Heart right ventricle (tissue), 16 donors: ENCODE measurements at regions of chr20 and their contacts with region 1.

Region 1: DNA sequence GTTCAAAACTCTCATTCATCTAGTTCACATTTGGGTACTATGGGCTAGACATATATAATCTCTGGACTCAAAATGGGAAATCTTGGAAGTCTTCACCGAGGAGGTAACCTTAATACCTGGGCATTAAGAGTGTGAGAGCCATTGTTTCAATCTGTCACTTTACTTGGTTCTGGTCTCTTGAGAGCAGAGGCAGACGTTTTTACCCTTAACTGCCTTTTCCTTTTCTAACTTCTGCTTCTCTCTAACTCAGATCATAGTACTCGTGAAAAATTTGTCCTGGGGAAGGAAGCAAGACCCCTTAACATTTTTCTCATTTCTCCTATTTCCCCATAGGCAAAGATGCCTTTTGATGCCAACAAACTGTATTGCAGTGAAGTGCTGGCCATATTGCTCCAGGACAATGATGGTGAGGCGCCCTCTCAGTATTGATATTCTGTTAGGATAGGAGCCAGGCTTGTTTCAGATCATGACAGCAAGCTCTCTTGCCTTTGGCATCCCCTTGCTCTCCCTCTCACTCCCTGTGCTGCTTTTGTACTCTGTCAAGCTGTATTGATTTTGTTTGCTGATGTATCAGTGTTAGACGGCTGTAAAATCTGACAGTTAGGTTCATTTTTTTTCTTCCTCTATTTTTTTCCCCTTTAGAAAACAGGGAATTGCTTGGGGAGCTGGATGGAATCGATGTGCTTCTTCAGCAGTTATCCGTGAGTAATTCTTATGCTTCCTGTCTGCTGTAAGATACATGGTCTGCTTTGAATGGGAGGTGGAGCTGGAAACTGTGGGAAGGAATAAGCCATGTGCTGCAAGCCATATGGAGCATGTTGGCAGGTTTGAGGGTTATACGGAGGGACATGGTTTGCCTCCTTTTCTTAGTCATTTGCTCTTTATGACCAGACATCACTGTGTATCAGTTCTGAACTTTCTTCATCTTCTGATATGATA is 83.5 kb downstream of the CTNNBL1 start:
- DNase-seq: no peak
- ATAC-seq: no peak
- H3K4me3 ChIP-seq: no peak overlapping the region
- H3K27ac ChIP-seq: no peak overlapping the region
- H3K4me1 ChIP-seq: peaks cover 0 to 13% (median 0%) of the 10 kb centered on the region in 9 donors
- H3K27me3 ChIP-seq: no peaks in the 10 kb centered on the region
- CTCF ChIP-seq: no peak

Region 2: GRCh38 chr20:37575884-37576283 is 201.4 kb before region 1 on chr20:
- intact Hi-C with region 1: loop called in 1 of 10 experiments (anchors 10 kb)
- DNase-seq: no peak
- ATAC-seq: no peak
- H3K4me3 ChIP-seq: no peak overlapping the region
- H3K27ac ChIP-seq: no peak overlapping the region
- H3K4me1 ChIP-seq: no peaks in the 10 kb centered on the region
- H3K27me3 ChIP-seq: peaks cover 0 to 42% (median 14%) of the 10 kb centered on the region in 7 donors
- CTCF ChIP-seq: no peak

Region 3: DNA sequence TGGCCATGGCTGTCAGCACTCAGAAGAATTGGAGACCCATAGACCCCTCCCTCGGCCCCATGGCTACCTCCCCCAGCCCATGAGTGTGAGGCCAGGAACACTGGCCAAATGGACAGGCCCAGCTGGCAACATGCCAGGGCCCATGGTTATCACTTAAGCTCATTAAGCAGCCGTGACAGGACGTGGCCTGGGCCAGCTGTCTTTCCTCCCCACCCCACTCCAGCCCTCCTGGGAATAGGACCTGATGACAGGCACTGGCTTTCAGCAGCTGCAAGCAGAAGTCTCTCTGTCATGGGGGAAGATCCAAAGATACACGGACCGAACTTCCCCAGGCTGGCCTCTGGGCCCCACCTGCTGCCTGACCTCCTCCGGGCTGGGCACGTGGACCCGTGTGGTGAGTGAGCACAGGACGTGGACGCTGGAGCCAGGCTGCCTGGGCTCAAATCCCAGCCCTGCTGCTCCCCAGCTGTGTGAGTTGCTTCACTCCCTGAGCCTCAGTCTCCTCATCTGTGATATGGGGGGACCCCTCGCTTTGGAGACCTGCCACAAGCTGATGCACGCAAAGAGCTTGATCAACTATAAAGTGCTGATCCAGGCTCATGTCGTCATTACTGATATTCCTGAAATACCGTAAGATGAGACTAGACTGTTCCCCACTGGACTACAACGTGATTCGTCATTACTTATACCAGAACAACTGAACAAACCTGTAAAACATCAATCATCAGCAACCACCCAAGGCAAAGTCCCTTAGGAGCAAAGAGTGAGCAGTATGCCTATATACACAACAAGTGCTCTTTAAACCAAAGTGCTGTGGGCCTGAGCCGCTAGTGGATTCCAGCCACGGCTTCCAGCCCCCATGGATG is 103.7 kb after region 1 on chr20:
- intact Hi-C with region 1: loop called in 1 of 10 experiments (anchors 10 kb)
- DNase-seq: peak; percentile 85 to 86
- ATAC-seq: peak; percentile 86 to 94 (median 93)
- H3K4me3 ChIP-seq: no peak overlapping the region
- H3K27ac ChIP-seq: peak overlapping the region in 2 of 10 donors; percentile 10 to 51
- H3K4me1 ChIP-seq: peaks cover 3 to 35% (median 20%) of the 10 kb centered on the region in 9 donors
- H3K27me3 ChIP-seq: peaks cover 0 to 23% (median 12%) of the 10 kb centered on the region in 7 donors
- CTCF ChIP-seq: no peak